Panc1 (cell line): ENCODE measurements at regions of chr7 and their contacts with region 1.

Region 1: DNA sequence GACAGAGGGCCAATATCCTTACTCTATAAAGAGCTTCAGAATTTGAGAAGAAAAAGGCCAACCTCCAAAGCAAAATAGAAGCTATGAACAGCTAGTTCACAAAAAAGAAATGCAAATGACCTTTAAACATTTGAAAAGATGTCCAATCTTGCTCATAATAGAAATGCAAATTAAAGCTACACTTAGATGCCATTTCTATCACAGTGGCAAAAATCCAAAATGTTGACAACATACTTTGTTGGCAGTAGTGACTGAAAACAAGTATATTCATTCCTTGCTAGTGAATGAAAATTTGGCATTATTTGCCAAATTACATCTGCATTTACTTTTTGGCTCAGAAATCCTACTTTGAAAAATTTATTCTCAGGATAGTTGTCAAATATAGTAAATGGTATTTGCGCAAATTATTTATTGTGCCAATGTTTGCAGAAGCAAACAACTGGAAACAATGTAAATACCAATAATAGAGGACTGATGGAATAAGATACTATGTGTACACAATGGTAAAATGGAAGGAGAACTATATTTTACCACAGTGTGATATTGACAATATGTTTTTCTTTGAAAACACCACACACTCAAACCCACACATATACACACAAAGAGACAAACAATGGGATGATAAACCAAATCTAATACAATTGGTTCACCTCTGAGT is 9.4 kb downstream of the TMEM106B start:
- DNase-seq: no peak
- ATAC-seq: no peak
- H3K4me3 ChIP-seq: no peak overlapping the region
- H3K27ac ChIP-seq: no peak overlapping the region
- H3K4me1 ChIP-seq: peaks cover 4% of the 10 kb centered on the region; the same call in 1 of the 2 replicates
- H3K27me3 ChIP-seq: no peaks in the 10 kb centered on the region
- CTCF ChIP-seq: no peak

Region 2: GRCh38 chr7:12085516-12085915 is 135.0 kb before region 1 on chr7:
- CTCF ChIA-PET with region 1: interaction called, 11 read pairs
- POLR2A ChIA-PET with region 1: interaction called, 4 read pairs
- in situ Hi-C with region 1: no loop called
- intact Hi-C with region 1: no loop called
- DNase-seq: no peak
- ATAC-seq: no peak
- H3K4me3 ChIP-seq: no peak overlapping the region
- H3K27ac ChIP-seq: no peak overlapping the region
- H3K4me1 ChIP-seq: no peaks in the 10 kb centered on the region
- H3K27me3 ChIP-seq: no peaks in the 10 kb centered on the region
- CTCF ChIP-seq: no peak